Panc1 (cell line): ENCODE measurements at regions of chr2 and their contacts with region 1.

Region 1: GRCh38 chr2:219344751-219345430 is 12.3 kb upstream of the RESP18 start:
- DNase-seq: no peak
- ATAC-seq: no peak
- H3K4me3 ChIP-seq: no peak overlapping the region
- H3K27ac ChIP-seq: no peak overlapping the region
- H3K4me1 ChIP-seq: no peaks in the 10 kb centered on the region
- H3K27me3 ChIP-seq: no peaks in the 10 kb centered on the region; the same call in 1 of the 2 replicates
- CTCF ChIP-seq: no peak

Region 2: DNA sequence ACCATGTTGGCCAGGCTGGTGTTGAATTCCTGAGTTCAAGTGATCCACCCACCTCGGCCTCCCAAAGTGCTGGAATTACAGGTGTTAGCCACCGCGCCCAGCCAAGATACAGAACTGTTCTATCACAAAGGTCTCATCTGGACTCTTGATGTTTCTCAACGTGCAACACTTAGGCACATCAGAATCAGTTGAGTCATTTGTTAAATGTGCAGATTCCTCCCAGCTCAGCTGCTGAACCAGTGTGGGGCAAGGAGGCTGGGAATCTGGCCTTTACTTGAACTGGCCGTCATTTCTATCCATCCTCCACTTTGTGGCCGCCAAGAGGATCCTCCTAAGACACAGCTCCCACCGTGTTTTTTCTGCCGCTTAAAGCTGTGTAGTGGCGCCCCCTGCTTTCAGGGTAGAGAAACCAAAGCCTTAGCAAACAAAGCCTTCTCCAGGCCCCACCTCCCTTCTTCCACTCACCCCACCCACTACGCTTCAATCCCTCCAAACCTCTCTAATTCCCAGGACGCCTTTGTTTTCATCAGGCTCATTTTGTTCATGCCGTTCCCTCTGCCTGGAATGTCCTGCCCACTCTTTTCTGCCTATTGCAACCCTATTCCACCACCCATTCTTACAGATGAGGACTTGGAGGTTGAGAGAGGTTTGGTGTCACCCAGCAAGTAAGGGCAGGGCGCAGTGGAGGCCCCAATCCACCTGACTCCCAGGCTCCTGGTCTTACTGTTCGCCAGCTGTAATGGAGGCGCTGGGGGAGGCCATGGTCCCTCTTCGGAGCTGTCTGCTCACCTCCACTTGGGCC is 89.0 kb after region 1 on chr2:
- CTCF ChIA-PET with region 1: no interaction called
- POLR2A ChIA-PET with region 1: no interaction called
- in situ Hi-C with region 1: no loop called
- intact Hi-C with region 1: no loop called
- DNase-seq: no peak
- ATAC-seq: no peak
- H3K4me3 ChIP-seq: no peak overlapping the region
- H3K27ac ChIP-seq: no peak overlapping the region
- H3K4me1 ChIP-seq: no peaks in the 10 kb centered on the region
- H3K27me3 ChIP-seq: no peaks in the 10 kb centered on the region
- CTCF ChIP-seq: no peak; the same call in 1 of the 2 replicates

Region 3: GRCh38 chr2:219447242-219448098 is 102.6 kb after region 1 on chr2:
- CTCF ChIA-PET with region 1: no interaction called
- POLR2A ChIA-PET with region 1: interaction called, 10 read pairs
- in situ Hi-C with region 1: no loop called
- intact Hi-C with region 1: no loop called
- DNase-seq: no peak
- ATAC-seq: no peak
- H3K4me3 ChIP-seq: no peak overlapping the region
- H3K27ac ChIP-seq: no peak overlapping the region
- H3K4me1 ChIP-seq: peaks cover 2% of the 10 kb centered on the region; the same call in 1 of the 2 replicates
- H3K27me3 ChIP-seq: no peaks in the 10 kb centered on the region
- CTCF ChIP-seq: no peak

Region 4: GRCh38 chr2:220789961-220790360 is 1445.1 kb after region 1 on chr2:
- CTCF ChIA-PET with region 1: no interaction called
- POLR2A ChIA-PET with region 1: no interaction called
- in situ Hi-C with region 1: no loop called
- intact Hi-C with region 1: no loop called
- DNase-seq: no peak
- ATAC-seq: no peak
- H3K4me3 ChIP-seq: no peak overlapping the region
- H3K27ac ChIP-seq: no peak overlapping the region
- H3K4me1 ChIP-seq: no peaks in the 10 kb centered on the region
- H3K27me3 ChIP-seq: no peaks in the 10 kb centered on the region
- CTCF ChIP-seq: no peak